Activated CD8-positive, alpha-beta T cell treated with anti-CD3 and anti-CD28 coated beads for 36 hours (primary cell): ENCODE measurements at regions of chr1 and their contacts with region 1.

Region 1: GRCh38 chr1:161305867-161306519 is 3.8 kb downstream of the MPZ start:
- DNase-seq: peak; percentile 90
- ATAC-seq: peak; percentile 99
- H3K4me3 Mint-ChIP-seq: peak overlapping the region; percentile 87
- H3K27ac Mint-ChIP-seq: peak overlapping the region; percentile 84
- H3K4me1 Mint-ChIP-seq: peaks cover 31% of the 10 kb centered on the region
- H3K27me3 Mint-ChIP-seq: no peaks in the 10 kb centered on the region
- CTCF ChIP-seq: peak; percentile 53

Region 2: GRCh38 chr1:161258439-161259344 is 47.3 kb before region 1 on chr1 and contains the start of gene PCP4L1:
- CTCF ChIA-PET with region 1: interaction called, 10 read pairs
- POLR2A ChIA-PET with region 1: no interaction called
- intact Hi-C with region 1: no loop called
- DNase-seq: peak; percentile 58
- ATAC-seq: peak; percentile 97
- H3K4me3 Mint-ChIP-seq: peak within 1 kb of the TSS; percentile 34
- H3K27ac Mint-ChIP-seq: no peak within 1 kb of the TSS
- H3K4me1 Mint-ChIP-seq: peaks cover 8% of the 10 kb centered on the region
- H3K27me3 Mint-ChIP-seq: peaks cover 48% of the 10 kb centered on the region
- CTCF ChIP-seq: no peak
- total RNA-seq, gene PCP4L1: 0.18 TPM in 1 of 2 experiments, not detected in the other

Region 3: GRCh38 chr1:161292631-161293030 is 13.4 kb before region 1 on chr1:
- CTCF ChIA-PET with region 1: interaction called, 37 read pairs
- POLR2A ChIA-PET with region 1: interaction called, 3 read pairs
- intact Hi-C with region 1: no loop called
- DNase-seq: no peak
- ATAC-seq: no peak
- H3K4me3 Mint-ChIP-seq: no peak overlapping the region
- H3K27ac Mint-ChIP-seq: no peak overlapping the region
- H3K4me1 Mint-ChIP-seq: no peaks in the 10 kb centered on the region
- H3K27me3 Mint-ChIP-seq: no peaks in the 10 kb centered on the region
- CTCF ChIP-seq: no peak

Region 4: DNA sequence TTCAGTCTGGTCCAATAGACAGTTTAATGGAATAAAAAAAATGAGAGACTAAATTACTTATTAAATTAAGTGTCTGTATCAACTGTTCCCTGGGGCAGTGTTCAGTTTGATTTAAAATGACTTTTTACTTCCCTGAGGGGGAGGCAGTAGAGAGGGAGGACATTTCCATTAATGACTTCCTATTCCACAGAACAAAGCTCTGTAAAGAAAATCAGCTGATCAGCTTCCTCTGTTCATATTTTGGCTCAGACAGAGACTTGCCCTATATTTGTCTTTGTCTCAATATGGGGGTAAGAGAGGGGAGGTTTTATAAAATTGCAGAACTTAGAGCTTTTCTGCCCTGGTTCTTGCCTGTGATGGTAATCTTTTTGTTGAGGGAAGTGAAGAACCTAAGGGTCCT is 53.3 kb after region 1 on chr1:
- CTCF ChIA-PET with region 1: no interaction called
- POLR2A ChIA-PET with region 1: no interaction called
- intact Hi-C with region 1: no loop called
- DNase-seq: no peak
- ATAC-seq: no peak
- H3K4me3 Mint-ChIP-seq: no peak overlapping the region
- H3K27ac Mint-ChIP-seq: peak overlapping the region; percentile 48
- H3K4me1 Mint-ChIP-seq: peaks cover 17% of the 10 kb centered on the region
- H3K27me3 Mint-ChIP-seq: no peaks in the 10 kb centered on the region
- CTCF ChIP-seq: no peak

Region 5: DNA sequence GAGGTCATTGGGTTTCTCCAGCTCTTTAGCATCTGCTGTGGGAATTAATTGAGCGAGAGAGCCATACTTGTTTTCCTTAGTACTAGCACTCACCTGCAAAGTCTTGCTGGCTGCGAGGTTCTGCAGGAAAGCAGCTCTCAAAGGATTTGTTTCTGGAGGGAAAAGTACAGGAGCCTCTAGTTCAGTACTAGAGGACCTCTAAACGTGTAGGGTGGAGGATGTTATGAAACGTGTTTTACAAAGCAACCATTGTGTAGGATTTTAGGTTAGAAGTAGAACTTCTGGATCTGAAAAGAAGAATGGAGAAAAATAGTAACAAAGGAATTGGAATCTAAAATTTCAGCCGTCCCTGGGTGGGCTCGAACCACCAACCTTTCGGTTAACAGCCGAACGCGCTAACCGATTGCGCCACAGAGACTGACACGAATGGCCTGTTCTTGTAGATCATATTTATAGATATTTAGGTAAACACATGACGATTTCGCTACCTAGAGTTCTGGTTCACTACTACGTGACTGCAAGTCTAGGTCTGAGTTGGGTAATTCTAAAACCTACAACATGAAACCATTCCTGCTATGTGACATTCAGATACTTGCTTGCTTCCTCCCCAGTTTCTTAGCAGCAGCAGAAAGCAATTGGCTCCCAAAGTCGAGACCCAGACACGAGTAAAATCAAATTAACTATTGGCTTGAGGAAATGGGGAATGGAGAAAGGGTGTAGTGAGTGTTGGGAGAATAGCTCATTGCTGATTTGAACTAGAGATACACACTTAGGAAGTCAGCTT is 121.9 kb after region 1 on chr1:
- CTCF ChIA-PET with region 1: no interaction called
- POLR2A ChIA-PET with region 1: no interaction called
- intact Hi-C with region 1: no loop called
- DNase-seq: peak; percentile 56
- ATAC-seq: peak; percentile 69
- H3K4me3 Mint-ChIP-seq: peak overlapping the region; percentile 60
- H3K27ac Mint-ChIP-seq: no peak overlapping the region
- H3K4me1 Mint-ChIP-seq: peaks cover 8% of the 10 kb centered on the region
- H3K27me3 Mint-ChIP-seq: peaks cover 30% of the 10 kb centered on the region
- CTCF ChIP-seq: no peak